Common myeloid progenitor, CD34-positive (primary cell): ENCODE measurements at regions of chr10 and their contacts with region 1.

Region 1: DNA sequence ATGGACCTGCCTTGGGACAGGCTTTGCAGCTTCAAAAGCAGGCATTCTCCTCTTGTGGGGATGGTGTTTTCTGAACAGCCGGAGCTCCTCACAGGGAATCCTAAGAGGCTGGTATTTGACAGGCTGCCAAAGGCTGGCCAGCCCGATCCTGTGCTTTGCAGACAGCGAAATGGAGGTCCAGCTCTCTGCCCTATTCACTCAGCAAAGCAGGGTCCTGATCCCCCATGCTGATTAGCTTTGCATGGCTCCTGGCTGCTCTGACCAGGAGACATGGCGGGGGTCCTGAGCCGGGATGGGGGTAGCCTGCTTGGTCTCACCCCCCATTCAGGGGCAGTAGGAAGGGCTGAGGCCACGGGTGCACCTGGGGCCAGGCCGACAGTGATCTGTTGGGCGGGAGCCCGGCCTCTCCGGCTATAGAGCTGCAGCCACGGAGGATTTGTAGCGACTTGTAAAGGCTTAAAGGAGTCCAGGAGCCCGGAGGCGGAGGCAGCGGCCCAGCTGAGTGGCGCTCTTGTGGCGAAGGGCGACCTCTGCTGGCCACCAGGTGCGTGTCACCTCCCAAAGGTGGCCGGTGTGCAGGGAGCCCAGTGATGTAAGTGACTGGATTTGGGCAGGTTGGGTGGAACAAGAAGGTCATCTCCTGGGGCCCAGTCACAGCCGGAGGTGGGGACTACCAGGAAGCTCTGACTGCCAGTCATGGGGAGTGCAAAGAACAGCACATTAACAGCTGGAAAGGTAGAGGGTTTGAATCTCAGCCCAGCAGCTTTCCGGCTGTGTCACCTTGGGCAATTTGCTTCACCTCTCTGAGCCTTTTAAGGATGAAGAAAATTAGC is 126.5 kb downstream of the ZMIZ1 start:
- DNase-seq: peak; percentile 86 to 93 (median 92)
- H3K4me3 ChIP-seq: peak overlapping the region in 3 of 7 experiments; percentile 4 to 37 (median 34)
- H3K27ac ChIP-seq: peak overlapping the region in 1 of 2 experiments; percentile 50
- H3K4me1 ChIP-seq: peaks cover 0 to 51% (median 43%) of the 10 kb centered on the region in 4 experiments
- H3K27me3 ChIP-seq: no peaks in the 10 kb centered on the region

Region 2: GRCh38 chr10:79073784-79074432 is 121.4 kb before region 1 on chr10:
- CTCF ChIA-PET with region 1: interaction called, 55 read pairs
- POLR2A ChIA-PET with region 1: interaction called, 4 read pairs
- DNase-seq: peak in 2 of 3 donors; percentile 69 to 72
- H3K4me3 ChIP-seq: peak overlapping the region in 5 of 7 experiments; percentile 35 to 99 (median 53)
- H3K27ac ChIP-seq: peak overlapping the region; percentile 85 to 90
- H3K4me1 ChIP-seq: peaks cover 4 to 81% (median 77%) of the 10 kb centered on the region in 4 experiments
- H3K27me3 ChIP-seq: no peaks in the 10 kb centered on the region

Region 3: GRCh38 chr10:79116801-79117723 is 78.2 kb before region 1 on chr10:
- CTCF ChIA-PET with region 1: interaction called, 45 read pairs
- POLR2A ChIA-PET with region 1: interaction called, 4 read pairs
- DNase-seq: no peak
- H3K4me3 ChIP-seq: no peak overlapping the region
- H3K27ac ChIP-seq: peak overlapping the region; percentile 1 to 49
- H3K4me1 ChIP-seq: peaks cover 0 to 62% (median 52%) of the 10 kb centered on the region in 4 experiments
- H3K27me3 ChIP-seq: no peaks in the 10 kb centered on the region

Region 4: DNA sequence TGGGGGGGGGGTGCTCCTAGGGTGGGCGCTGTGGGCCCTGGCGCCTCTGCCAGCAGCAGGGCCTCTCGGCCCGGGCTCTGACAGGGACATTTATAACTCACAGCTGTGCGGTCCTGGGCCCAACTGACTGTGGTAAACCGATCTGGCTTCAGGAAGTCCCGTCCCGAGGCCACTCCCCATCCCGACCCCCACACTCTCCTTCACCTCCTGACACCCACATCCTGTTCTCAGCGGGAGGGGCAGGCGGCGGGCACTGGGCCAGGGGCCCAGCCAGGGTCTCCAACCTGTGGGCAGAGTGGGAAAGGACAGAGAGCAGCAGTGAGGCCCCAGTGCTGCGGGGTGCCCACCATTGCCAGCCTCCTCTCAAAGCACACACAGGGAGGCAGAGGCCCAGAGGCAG is 57.5 kb before region 1 on chr10:
- CTCF ChIA-PET with region 1: interaction called, 114 read pairs
- POLR2A ChIA-PET with region 1: interaction called, 6 read pairs
- DNase-seq: peak; percentile 86 to 98 (median 97)
- H3K4me3 ChIP-seq: peak overlapping the region in 4 of 7 experiments; percentile 50 to 68 (median 58)
- H3K27ac ChIP-seq: peak overlapping the region; percentile 85 to 90
- H3K4me1 ChIP-seq: peaks cover 21 to 100% (median 99%) of the 10 kb centered on the region in 4 experiments
- H3K27me3 ChIP-seq: no peaks in the 10 kb centered on the region

Region 5: GRCh38 chr10:79155301-79156081 is 39.8 kb before region 1 on chr10:
- CTCF ChIA-PET with region 1: interaction called, 190 read pairs
- POLR2A ChIA-PET with region 1: no interaction called
- DNase-seq: no peak
- H3K4me3 ChIP-seq: no peak overlapping the region
- H3K27ac ChIP-seq: peak overlapping the region; percentile 9 to 80
- H3K4me1 ChIP-seq: peaks cover 0 to 89% (median 45%) of the 10 kb centered on the region in 4 experiments
- H3K27me3 ChIP-seq: no peaks in the 10 kb centered on the region

Region 6: DNA sequence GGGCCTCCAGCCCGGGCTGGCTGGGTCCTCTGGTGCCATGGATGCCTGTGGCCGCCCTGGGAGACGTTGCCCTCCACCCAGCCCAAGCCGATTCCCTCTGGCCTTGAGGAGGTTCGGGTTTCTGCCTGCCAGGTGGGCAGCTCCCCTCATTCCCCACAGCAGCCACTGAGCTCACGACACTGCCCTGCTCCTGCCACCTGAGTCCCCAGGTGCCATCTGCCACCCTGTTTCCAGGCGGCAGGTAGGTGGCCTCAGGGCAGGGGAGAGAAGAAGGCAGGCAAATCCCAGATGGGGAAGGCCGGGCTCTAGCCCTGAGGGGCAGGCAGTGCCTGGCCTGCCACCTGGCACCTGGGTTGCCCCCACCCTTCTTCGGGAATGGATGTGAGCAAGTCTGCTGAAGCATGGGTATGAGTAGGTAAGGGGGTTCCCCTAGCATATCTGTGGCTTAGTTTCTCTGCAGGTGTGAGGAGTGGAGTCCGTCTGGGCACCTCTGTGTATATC is 59.8 kb after region 1 on chr10:
- CTCF ChIA-PET with region 1: no interaction called
- POLR2A ChIA-PET with region 1: no interaction called
- DNase-seq: no peak
- H3K4me3 ChIP-seq: no peak overlapping the region
- H3K27ac ChIP-seq: no peak overlapping the region
- H3K4me1 ChIP-seq: peaks cover 0 to 59% (median 6%) of the 10 kb centered on the region in 4 experiments
- H3K27me3 ChIP-seq: no peaks in the 10 kb centered on the region